ENCODE measurements at regions of chr10 and their contacts with region 1.

Region 1: DNA sequence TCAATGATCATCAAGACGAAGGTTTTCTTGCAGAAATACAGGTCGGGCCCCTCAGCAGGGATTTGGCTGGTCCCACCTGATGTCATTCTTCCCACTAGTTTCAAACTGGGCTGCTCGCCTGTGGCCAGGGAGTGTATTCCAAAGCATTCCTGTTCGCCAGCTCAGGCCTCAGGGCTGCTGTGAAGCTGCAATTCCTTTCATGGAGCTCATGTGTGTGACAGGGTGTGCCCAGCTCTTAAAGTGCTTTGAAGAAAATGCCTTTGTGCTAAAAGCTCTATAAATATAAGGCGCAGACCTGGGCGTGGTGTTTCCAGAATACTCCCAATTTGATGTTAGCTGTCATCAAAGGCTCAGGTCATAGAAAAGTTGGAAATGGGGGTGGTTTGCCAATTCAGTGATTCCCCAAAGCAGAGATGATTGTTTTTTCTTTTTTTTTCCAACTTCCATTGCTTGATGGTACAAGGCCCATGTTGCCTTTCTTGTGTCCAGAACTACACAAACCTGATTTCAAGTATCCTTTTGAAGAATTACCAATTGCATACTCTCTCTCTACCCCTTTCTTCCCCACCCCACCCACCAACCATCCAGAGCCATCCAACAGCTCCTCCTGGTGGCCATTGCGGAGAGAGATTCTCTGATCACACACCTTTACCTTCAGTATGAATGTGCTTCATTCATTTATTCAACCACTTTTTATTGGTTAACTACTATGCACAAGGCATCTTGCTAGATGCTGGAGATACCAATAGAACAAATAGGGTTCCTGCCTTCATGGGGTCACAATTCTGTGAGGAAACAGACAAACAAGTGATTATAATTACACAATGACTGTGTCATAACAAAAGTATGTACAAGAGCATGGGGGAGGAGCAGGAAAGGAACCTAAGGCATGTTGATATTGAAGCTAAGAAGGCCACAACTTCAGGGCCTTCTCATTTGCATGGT is 297.3 kb upstream of the LYZL1 start:
- DNase-seq: peak; percentile 61 to 90
- H3K4me3 ChIP-seq: no peak overlapping the region
- H3K27ac ChIP-seq: peak overlapping the region; percentile 62 to 74
- H3K4me1 ChIP-seq: peaks cover 0 to 11% of the 10 kb centered on the region in 2 donors
- H3K27me3 ChIP-seq: no peaks in the 10 kb centered on the region
- CTCF ChIP-seq: peak; percentile 54 to 79 (median 76)

Region 2: GRCh38 chr10:28796606-28797512 is 194.7 kb before region 1 on chr10:
- intact Hi-C with region 1: loop called (anchors 5 kb)
- DNase-seq: peak; percentile 21 to 87
- H3K4me3 ChIP-seq: no peak overlapping the region
- H3K27ac ChIP-seq: peak overlapping the region; percentile 51 to 68
- H3K4me1 ChIP-seq: peaks cover 0 to 8% of the 10 kb centered on the region in 2 donors
- H3K27me3 ChIP-seq: no peaks in the 10 kb centered on the region
- CTCF ChIP-seq: no peak

Region 3: GRCh38 chr10:28839600-28840007 is 152.0 kb before region 1 on chr10:
- intact Hi-C with region 1: loop called (anchors 5 kb)
- DNase-seq: no peak
- H3K4me3 ChIP-seq: no peak overlapping the region
- H3K27ac ChIP-seq: peak overlapping the region in 1 of 2 donors; percentile 31
- H3K4me1 ChIP-seq: peaks cover 0 to 5% of the 10 kb centered on the region in 2 donors
- H3K27me3 ChIP-seq: no peaks in the 10 kb centered on the region
- CTCF ChIP-seq: no peak

Region 4: DNA sequence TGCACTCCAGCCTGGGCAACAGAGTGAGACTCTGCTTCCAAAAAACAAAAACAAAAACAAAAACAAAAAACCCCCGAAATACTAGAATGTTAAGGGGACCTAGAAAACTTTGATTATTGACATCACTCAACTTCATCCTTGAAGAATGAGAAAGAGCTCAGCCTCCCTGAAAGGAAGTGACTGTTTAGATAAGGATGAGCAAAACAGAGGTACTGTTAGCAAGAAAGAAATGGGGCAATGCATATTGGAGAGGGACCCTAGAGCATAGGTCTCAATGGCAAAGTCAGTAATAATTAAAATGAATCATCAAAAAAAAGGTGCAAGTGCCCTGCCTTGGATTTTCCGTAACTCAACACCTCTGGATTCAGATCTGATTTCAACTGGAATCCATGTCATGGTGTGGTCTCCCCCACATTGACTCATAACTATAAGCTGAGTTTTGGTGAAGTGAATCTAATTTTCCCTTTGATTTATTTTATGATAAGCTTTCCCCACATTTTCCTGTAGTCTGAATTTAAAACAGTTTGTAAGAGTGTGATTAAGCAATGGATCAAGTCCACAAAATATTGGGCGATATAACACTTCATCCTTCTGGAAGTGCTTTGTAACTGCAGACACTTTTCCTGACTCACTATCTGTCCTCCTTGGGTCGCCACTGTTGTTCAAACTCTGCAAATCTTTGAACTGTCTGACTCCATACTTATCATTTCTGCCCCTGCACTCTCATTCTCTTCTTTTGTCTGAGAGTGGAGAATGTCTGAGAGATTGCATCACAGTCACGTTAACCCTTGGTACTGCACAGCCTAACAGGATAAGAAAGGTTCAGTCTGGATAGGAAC is 72.4 kb after region 1 on chr10:
- intact Hi-C with region 1: no loop called
- DNase-seq: no peak
- H3K4me3 ChIP-seq: no peak overlapping the region
- H3K27ac ChIP-seq: no peak overlapping the region
- H3K4me1 ChIP-seq: no peaks in the 10 kb centered on the region
- H3K27me3 ChIP-seq: no peaks in the 10 kb centered on the region
- CTCF ChIP-seq: no peak

Region 5: DNA sequence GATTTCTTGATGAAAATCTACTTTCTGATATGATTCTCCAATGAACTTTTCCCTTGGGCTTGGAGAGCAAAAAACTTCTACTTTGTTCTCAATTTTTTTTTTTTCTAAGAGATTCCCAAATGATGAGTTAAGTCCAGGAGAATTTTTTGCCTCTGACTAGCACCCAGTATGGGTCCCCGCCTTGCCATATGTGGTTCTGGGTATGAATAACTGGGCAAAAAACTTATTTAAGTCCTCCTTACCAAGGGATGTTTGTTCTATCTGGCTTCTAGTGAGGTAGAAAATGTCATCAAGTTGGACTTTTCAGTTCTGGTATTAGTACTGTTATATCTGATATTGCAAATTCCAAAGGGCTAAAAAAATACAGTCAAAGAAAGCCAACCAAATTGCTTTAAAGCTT is 149.5 kb after region 1 on chr10:
- intact Hi-C with region 1: loop called (anchors 5 kb)
- DNase-seq: no peak
- H3K4me3 ChIP-seq: no peak overlapping the region
- H3K27ac ChIP-seq: peak overlapping the region; percentile 8 to 58
- H3K4me1 ChIP-seq: peaks cover 0 to 6% of the 10 kb centered on the region in 2 donors
- H3K27me3 ChIP-seq: no peaks in the 10 kb centered on the region
- CTCF ChIP-seq: no peak

Region 6: DNA sequence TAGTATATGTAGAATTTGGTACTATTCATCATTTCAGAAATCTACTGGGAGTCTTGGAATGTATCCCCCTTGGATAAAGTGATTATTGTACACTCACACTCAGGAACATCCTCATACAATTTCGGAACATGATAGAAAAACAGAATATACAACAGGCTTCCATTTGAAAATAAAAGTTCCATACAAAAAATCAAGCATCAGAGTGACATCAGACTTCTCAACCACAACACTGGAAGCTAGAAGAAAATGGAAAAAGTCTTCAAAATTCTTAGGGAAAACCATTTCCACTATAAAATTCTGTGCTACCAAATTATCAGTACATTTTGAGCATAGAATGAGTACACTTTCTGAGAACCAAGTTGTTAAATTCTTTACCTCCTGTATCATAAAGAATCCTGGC is 306.1 kb after region 1 on chr10:
- intact Hi-C with region 1: no loop called
- DNase-seq: no peak
- H3K4me3 ChIP-seq: no peak overlapping the region
- H3K27ac ChIP-seq: no peak overlapping the region
- H3K4me1 ChIP-seq: no peaks in the 10 kb centered on the region
- H3K27me3 ChIP-seq: no peaks in the 10 kb centered on the region
- CTCF ChIP-seq: no peak

Measured in ascending aorta (tissue), 2 donors.